ENCODE measurements at regions of chr1 and their contacts with region 1.

Region 1: DNA sequence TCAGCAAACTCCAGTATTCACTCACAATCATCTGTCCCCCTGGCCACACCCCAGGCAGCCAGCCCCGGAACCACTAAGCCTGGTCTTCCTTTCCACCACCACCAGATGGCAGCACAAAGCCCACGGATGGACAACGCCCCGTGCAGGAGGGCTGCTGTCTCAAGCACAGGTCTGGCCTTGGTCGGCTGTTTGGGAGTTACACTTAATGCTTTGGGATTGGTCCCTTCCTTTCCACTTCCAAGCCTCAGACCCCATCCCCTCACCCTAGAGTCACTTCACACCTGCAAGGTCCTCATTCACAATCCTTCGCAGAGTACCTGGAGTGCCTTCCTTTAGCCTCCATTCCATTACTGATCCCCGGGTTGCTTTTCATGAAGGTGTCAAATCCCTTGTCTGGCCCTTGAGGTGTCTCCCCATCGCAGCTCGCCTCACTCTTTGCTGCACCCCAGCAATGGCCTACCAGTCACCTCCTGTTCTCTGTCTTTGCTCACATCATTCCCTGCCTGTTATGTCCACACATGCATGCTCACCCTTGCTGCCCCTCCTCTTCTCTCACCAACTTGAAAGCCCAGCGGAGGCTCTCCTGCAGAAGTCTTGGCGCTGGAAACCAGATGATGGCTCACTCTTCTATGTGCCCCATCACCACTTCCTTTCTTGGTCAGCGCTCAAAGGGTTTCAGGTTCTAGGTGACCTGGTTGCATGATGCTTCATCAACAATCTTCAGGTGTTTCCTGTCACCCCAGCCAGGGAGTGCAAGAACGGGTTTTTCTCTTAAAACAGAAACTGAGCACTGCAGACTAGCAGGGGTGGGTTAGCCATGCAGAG is 24.9 kb upstream of the KCNA2 start:
- DNase-seq: peak; percentile 92
- H3K4me3 Mint-ChIP-seq: no peak overlapping the region
- H3K27ac Mint-ChIP-seq: no peak overlapping the region
- H3K4me1 Mint-ChIP-seq: peaks cover 54% of the 10 kb centered on the region
- H3K27me3 Mint-ChIP-seq: no peaks in the 10 kb centered on the region

Region 2: DNA sequence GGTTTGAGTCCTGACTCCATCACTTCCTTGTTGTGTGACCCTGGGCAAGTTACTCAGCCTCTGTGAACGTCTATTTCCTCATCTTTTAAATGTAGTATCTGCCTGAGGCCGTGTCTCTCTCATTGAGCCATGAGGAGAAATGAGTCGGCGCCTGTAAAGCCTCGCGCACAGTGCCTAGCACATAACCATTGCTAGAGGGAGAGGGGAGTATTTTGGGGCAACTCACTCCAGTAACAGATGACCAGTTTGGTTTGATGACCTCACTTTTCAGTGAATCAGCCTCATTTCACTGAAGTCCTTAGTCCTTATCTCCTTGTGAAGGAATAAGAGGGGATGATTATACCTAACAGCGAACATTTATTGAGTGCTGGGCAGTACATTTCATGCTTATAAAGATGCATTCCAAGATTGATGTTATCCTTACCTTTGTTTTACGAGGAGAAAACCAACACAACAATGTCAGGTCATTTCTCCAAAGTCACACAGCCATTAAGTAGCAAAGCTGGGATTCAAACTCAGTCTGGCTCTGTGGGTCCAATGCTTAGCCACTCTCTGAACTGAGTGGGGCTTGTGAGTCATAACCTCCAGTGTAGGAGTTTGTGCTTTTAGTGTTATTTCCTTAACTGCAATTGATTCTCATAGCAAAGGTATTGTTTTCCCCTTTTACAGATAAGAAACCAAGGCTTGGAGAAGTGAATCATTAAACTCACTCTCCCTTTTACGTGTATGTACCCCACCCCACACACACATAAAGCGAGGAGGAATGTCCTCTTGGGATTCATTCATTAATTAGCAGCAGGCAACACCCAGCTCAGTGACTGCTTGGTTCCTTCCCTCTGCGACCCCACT is 395.0 kb before region 1 on chr1:
- CTCF ChIA-PET with region 1: no interaction called
- intact Hi-C with region 1: loop called (anchors 5 kb)
- DNase-seq: peak; percentile 84
- H3K4me3 Mint-ChIP-seq: no peak overlapping the region
- H3K27ac Mint-ChIP-seq: peak overlapping the region; percentile 89
- H3K4me1 Mint-ChIP-seq: peaks cover 55% of the 10 kb centered on the region
- H3K27me3 Mint-ChIP-seq: no peaks in the 10 kb centered on the region

Region 3: DNA sequence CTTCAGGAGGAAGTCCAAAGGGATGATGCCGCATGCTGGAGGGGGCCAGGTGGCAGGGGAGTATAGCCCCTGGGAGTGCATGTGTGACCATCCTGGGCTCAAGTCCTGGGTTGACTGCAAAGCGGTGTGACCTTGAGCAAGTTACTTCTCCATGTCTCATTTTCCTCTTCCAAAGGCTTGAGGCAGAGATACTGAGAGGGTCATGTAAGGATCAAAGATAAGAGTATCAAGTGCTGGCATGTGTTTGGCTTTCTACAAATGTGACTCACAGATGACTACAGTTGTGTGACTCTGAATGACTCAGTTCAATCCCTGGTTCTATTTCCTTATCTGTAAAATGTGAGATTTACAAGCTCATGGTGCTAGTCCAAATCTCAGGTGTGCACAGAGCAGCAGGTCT is 154.0 kb before region 1 on chr1:
- CTCF ChIA-PET with region 1: no interaction called
- intact Hi-C with region 1: no loop called
- DNase-seq: no peak
- H3K4me3 Mint-ChIP-seq: no peak overlapping the region
- H3K27ac Mint-ChIP-seq: no peak overlapping the region
- H3K4me1 Mint-ChIP-seq: peaks cover 10% of the 10 kb centered on the region
- H3K27me3 Mint-ChIP-seq: peaks cover 3% of the 10 kb centered on the region